Sciatic nerve (tissue), 2 donors: ENCODE measurements at regions of chr17 and their contacts with region 1.

Region 1: DNA sequence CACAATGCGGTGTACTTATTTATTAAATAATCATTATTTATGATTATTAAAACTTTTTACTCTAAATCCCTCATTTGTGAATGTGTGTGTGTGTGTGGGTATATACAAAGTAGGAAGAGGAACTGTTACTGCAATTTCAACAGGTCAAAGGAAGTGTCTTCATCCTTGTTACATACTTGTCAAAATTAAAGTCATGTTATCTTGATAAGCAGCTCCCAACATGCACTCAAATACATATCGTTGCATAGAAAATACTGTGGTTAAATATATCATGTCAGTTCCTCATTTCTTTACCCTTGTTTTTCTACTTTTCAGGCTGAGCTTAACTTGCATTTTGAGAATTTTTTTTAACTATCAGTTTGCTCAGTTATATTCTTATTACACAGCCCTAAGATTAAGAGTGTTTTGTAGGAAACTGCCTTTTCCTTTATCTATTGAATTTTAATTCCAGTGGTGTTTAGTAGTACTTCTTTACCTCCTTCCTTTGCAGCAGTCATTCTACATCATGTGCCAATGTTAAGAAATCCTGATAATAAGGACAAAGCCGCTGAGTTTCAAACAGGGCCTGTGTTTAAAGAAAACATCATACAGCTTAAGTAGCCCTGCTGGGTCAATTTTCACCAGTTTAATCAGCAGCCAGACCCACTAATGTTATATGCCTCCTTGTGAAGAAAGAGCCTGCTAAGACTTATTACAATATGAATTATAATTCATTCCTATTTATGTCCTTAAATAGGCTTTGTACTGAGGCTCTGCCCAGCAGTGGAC is 7.2 kb downstream of the EFCAB5 start:
- DNase-seq: no peak
- ATAC-seq: no peak

Region 2: DNA sequence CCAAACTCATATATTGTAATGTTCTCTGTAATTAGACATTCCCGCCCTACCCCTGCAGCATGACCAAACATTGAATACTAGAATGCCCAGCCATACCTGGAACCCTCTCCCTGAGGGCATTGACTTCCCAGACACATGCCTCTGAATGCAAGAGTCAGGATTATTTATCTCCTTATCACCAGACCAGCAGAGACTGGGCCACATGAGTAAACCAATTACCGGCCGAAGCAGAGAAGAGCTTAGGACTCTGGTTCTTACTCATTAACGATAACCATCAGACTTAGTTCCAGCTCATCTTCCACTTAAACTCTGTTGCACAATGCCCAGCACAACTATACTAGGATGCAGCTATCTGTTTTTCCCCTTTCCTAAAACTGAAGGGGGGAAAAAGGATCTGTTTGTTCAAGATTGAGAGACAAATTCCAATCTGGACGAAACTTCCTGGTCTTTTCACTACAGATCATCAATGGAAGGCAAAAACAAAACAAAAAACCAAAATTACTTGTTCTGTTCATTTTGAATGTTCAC is 237.7 kb before region 1 on chr17:
- intact Hi-C with region 1: no loop called
- DNase-seq: no peak
- ATAC-seq: peak; percentile 35

Region 3: GRCh38 chr17:29918922-29919856 is 29.4 kb before region 1 on chr17:
- intact Hi-C with region 1: loop called (anchors 2 kb)
- DNase-seq: no peak
- ATAC-seq: no peak

Region 4: DNA sequence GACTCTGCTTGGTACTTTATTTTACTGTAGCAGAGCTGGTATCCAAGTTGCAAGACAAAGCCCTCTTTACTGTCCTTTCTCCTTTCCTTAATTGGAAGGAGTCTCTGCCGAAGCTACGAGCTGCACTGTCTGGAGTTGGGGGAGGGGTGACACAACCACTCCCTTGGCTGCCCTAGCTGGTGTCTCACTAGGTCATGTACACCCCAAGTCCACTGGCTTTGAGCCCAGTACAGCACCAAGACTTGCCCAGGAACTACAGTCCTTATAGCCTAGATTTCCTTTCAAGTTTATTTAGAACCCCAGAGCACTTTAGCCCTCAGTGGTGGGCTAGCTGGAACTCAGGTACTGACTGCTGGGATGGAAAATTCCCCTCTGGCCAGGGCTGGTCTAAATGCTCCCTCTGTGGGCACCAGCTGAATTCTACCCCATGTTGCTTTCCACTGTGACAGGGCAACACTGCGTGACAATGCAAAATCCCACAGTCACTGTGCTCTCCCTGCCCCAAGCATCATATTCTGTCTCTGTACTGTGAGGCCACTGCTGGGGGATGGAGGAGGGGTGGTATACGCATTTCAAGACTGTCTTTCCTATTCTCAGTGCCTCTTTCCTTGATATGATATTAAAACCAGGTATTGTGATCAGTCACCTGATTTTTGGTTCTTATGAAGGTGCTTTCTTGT is 11.2 kb after region 1 on chr17:
- intact Hi-C with region 1: no loop called
- DNase-seq: no peak
- ATAC-seq: no peak